ENCODE measurements at regions of chr7 and their contacts with region 1.

Region 1: GRCh38 chr7:75762314-75762917 is 9.6 kb downstream of the CCL26 start:
- DNase-seq: no peak
- ATAC-seq: peak; percentile 90
- H3K4me3 Mint-ChIP-seq: no peak overlapping the region
- H3K27ac Mint-ChIP-seq: no peak overlapping the region
- H3K4me1 Mint-ChIP-seq: peaks cover 5% of the 10 kb centered on the region
- H3K27me3 Mint-ChIP-seq: no peaks in the 10 kb centered on the region
- CTCF ChIP-seq: no peak

Region 2: DNA sequence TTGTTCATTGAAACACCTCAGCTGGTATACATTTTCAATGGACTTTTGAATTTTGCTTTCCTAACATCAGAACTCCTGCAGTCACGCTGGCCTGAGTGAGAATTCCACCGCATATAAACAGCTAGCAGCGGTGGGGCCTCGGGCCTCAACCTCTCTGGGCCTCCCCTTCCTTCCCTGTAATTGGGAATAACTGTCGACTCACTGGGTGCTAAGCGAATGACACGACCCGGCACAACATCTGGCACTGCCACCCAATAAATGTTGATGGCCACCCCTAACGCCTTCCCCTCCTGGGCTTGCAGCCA is 689.5 kb before region 1 on chr7:
- CTCF ChIA-PET with region 1: no interaction called
- POLR2A ChIA-PET with region 1: no interaction called
- intact Hi-C with region 1: loop called (anchors 5 kb)
- DNase-seq: no peak
- ATAC-seq: no peak
- H3K4me3 Mint-ChIP-seq: peak overlapping the region; percentile 96
- H3K27ac Mint-ChIP-seq: peak overlapping the region; percentile 96
- H3K4me1 Mint-ChIP-seq: peaks cover 13% of the 10 kb centered on the region
- H3K27me3 Mint-ChIP-seq: no peaks in the 10 kb centered on the region
- CTCF ChIP-seq: no peak

Region 3: DNA sequence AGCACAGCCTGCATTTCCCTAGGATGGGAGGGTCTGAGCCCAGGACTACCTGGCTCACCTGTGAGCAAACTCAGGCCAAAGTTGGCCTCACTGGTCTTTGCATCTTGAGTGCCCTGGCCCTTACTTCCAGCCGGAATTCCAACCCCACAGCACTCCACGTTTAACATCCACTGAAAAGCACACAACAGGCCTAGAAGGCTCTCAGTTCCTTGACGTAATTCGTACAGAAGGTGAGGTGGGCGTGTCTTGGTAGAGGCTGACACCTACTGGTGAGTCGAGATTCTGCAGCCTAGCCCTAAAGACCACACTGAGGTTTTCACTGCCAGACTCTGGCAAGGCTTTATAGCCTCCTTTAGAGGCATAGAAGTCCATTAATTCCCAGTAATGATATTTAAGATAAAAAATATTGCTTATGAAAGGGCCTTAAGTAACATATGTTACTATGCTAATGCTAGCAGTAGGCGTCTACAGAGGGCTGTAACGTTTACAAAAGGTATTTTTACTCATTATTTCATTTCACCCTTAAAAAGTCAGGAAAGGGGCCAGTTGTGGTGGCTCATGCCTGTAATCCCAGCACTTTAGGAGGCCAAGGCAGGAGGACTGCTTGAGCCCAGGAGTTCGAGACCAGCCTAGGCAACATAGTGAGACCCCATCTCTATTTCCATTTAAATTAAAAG is 119.5 kb before region 1 on chr7:
- CTCF ChIA-PET with region 1: interaction called, 5 read pairs
- POLR2A ChIA-PET with region 1: no interaction called
- intact Hi-C with region 1: loop called (anchors 1 kb)
- DNase-seq: peak; percentile 39
- ATAC-seq: peak; percentile 90
- H3K4me3 Mint-ChIP-seq: no peak overlapping the region
- H3K27ac Mint-ChIP-seq: no peak overlapping the region
- H3K4me1 Mint-ChIP-seq: peaks cover 17% of the 10 kb centered on the region
- H3K27me3 Mint-ChIP-seq: no peaks in the 10 kb centered on the region
- CTCF ChIP-seq: peak; percentile 41

Region 4: DNA sequence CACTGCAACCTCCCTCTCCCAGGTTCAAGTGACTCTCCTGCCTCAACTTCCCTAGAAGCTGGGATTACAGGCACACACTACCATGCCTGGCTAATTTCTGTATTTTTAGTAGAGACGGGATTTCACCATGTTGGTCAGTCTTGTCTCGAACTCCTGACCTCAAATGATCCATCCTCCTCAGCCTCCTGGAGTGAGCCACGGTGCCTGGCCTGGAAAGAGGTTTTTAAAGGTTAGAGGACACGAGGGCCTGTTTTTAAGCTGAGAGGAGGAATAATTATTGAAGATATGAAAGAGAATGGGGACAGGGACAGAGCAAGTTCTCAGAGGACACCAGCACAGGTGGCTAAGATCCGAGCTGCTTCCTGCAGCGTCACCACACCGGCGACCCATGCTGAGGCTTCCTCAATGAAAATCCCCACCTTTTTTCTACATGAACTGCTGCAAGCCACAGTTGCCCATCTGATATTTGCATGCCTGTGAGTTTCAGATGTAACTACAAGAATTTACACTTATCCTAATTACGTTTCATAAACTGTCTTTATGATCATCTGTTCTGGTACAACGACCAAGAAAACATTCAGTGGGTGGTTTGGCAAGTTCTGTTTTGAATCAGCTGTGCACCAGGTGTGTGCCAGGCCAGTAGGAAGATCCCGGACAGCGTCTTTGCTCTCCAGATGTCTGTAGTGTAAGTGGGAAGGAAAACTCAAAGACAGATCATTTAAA is 99.7 kb before region 1 on chr7:
- CTCF ChIA-PET with region 1: interaction called, 6 read pairs
- POLR2A ChIA-PET with region 1: interaction called, 3 read pairs
- intact Hi-C with region 1: loop called (anchors 2 kb)
- DNase-seq: peak; percentile 44
- ATAC-seq: peak; percentile 88
- H3K4me3 Mint-ChIP-seq: peak overlapping the region; percentile 55
- H3K27ac Mint-ChIP-seq: peak overlapping the region; percentile 84
- H3K4me1 Mint-ChIP-seq: peaks cover 29% of the 10 kb centered on the region
- H3K27me3 Mint-ChIP-seq: no peaks in the 10 kb centered on the region
- CTCF ChIP-seq: no peak

Region 5: GRCh38 chr7:76020031-76020714 is 257.8 kb after region 1 on chr7:
- CTCF ChIA-PET with region 1: interaction called, 7 read pairs
- POLR2A ChIA-PET with region 1: no interaction called
- intact Hi-C with region 1: loop called (anchors 1 kb)
- DNase-seq: peak; percentile 52
- ATAC-seq: peak; percentile 64
- H3K4me3 Mint-ChIP-seq: no peak overlapping the region
- H3K27ac Mint-ChIP-seq: peak overlapping the region; percentile 24
- H3K4me1 Mint-ChIP-seq: peaks cover 16% of the 10 kb centered on the region
- H3K27me3 Mint-ChIP-seq: no peaks in the 10 kb centered on the region
- CTCF ChIP-seq: no peak